Activated CD4-positive, alpha-beta memory T cell treated with anti-CD3 and anti-CD28 coated beads for 36 hours (primary cell): ENCODE measurements at regions of chr21 and their contacts with region 1.

Region 1: GRCh38 chr21:45080639-45081414 is 6.4 kb downstream of the ADARB1 start:
- DNase-seq: peak; percentile 74
- H3K4me3 Mint-ChIP-seq: peak overlapping the region; percentile 36
- H3K27ac Mint-ChIP-seq: peak overlapping the region; percentile 96
- H3K4me1 Mint-ChIP-seq: peaks cover 98% of the 10 kb centered on the region
- H3K27me3 Mint-ChIP-seq: no peaks in the 10 kb centered on the region

Region 2: GRCh38 chr21:44817506-44817880 is 263.3 kb before region 1 on chr21:
- CTCF ChIA-PET with region 1: no interaction called
- POLR2A ChIA-PET with region 1: no interaction called
- intact Hi-C with region 1: loop called (anchors 5 kb)
- DNase-seq: peak; percentile 95
- H3K4me3 Mint-ChIP-seq: peak overlapping the region; percentile 72
- H3K27ac Mint-ChIP-seq: peak overlapping the region; percentile 33
- H3K4me1 Mint-ChIP-seq: peaks cover 11% of the 10 kb centered on the region
- H3K27me3 Mint-ChIP-seq: no peaks in the 10 kb centered on the region

Region 3: GRCh38 chr21:45460611-45461368 is 380.0 kb after region 1 on chr21:
- CTCF ChIA-PET with region 1: no interaction called
- POLR2A ChIA-PET with region 1: no interaction called
- intact Hi-C with region 1: no loop called
- DNase-seq: no peak
- H3K4me3 Mint-ChIP-seq: no peak overlapping the region
- H3K27ac Mint-ChIP-seq: no peak overlapping the region
- H3K4me1 Mint-ChIP-seq: no peaks in the 10 kb centered on the region
- H3K27me3 Mint-ChIP-seq: peaks cover 14% of the 10 kb centered on the region